ENCODE measurements at regions of chr3 and their contacts with region 1.

Region 1: DNA sequence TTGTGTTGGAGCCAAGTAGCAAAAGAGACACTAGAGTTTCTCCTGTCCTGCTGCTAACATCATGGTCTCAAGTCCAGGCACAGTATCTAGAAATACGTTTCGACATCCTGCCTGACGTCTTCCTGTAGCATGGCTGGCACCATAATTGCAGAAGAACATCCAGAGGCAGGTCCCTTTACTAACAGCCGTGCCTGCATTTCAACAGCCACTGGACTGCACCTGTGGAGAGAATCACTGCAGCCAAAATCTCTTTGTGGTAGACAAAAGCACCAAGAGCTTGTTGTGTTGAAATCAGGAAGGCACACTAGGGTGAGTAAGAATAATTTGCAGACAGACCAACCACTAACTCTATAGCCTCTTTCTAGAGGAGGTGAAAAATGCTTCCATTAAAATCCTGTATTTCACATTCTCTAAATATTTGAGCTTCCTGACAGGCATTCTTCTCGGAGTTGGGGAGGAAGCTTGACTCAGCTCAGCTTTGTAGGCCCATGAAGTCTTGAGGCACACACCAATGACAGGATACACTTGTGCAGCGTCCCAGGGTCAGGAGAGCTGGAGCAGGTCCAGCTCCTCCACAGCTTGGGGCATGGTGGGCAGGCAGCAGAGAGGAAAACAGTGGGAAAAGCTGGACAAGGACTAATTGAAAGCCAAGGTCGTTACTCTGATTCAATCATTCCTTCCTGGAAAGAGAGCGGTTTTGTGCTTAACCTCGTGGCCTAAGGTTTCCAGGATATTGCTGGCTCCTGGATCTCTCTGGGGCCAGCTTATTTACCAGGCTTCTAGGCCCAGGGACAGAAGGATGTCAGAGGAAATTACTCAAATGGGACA is 244.9 kb downstream of the FAM43A start:
- DNase-seq: peak in 1 of 4 donors; percentile 37
- ATAC-seq: peak; percentile 53
- H3K4me3 ChIP-seq: no peak overlapping the region
- H3K27ac ChIP-seq: peak overlapping the region in 1 of 2 donors; percentile 65
- H3K4me1 ChIP-seq: peaks cover 0 to 42% of the 10 kb centered on the region in 2 donors
- H3K27me3 ChIP-seq: no peaks in the 10 kb centered on the region
- CTCF ChIP-seq: no peak

Region 2: GRCh38 chr3:194508491-194509453 is 421.8 kb before region 1 on chr3:
- intact Hi-C with region 1: no loop called
- DNase-seq: peak in 1 of 4 donors; percentile 19
- ATAC-seq: no peak
- H3K4me3 ChIP-seq: no peak overlapping the region
- H3K27ac ChIP-seq: peak overlapping the region in 1 of 2 donors; percentile 78
- H3K4me1 ChIP-seq: peaks cover 0 to 17% of the 10 kb centered on the region in 2 donors
- H3K27me3 ChIP-seq: no peaks in the 10 kb centered on the region
- CTCF ChIP-seq: no peak

Region 3: GRCh38 chr3:195106418-195106906 is 175.9 kb after region 1 on chr3:
- intact Hi-C with region 1: loop called in 1 of 2 experiments (anchors 10 kb)
- DNase-seq: peak; percentile 59 to 94 (median 68)
- ATAC-seq: peak; percentile 90
- H3K4me3 ChIP-seq: no peak overlapping the region
- H3K27ac ChIP-seq: no peak overlapping the region
- H3K4me1 ChIP-seq: peaks cover 0 to 53% of the 10 kb centered on the region in 2 donors
- H3K27me3 ChIP-seq: no peaks in the 10 kb centered on the region
- CTCF ChIP-seq: peak; percentile 100